ENCODE measurements at regions of chr11 and their contacts with region 1.

Region 1: GRCh38 chr11:123478352-123478987 is 48.4 kb downstream of the GRAMD1B start:
- DNase-seq: peak; percentile 39
- ATAC-seq: peak; percentile 47
- H3K4me3 Mint-ChIP-seq: peak overlapping the region; percentile 15
- H3K27ac Mint-ChIP-seq: peak overlapping the region; percentile 18
- H3K4me1 Mint-ChIP-seq: peaks cover 49% of the 10 kb centered on the region
- H3K27me3 Mint-ChIP-seq: no peaks in the 10 kb centered on the region

Region 2: GRCh38 chr11:123301696-123302400 is 176.6 kb before region 1 on chr11:
- CTCF ChIA-PET with region 1: interaction called, 47 read pairs
- POLR2A ChIA-PET with region 1: interaction called, 3 read pairs
- DNase-seq: peak; percentile 77
- ATAC-seq: peak; percentile 96
- H3K4me3 Mint-ChIP-seq: peak overlapping the region; percentile 44
- H3K27ac Mint-ChIP-seq: no peak overlapping the region
- H3K4me1 Mint-ChIP-seq: peaks cover 41% of the 10 kb centered on the region
- H3K27me3 Mint-ChIP-seq: peaks cover 3% of the 10 kb centered on the region

Region 3: GRCh38 chr11:123366924-123367323 is 111.5 kb before region 1 on chr11:
- CTCF ChIA-PET with region 1: no interaction called
- POLR2A ChIA-PET with region 1: no interaction called
- DNase-seq: no peak
- ATAC-seq: no peak
- H3K4me3 Mint-ChIP-seq: no peak overlapping the region
- H3K27ac Mint-ChIP-seq: no peak overlapping the region
- H3K4me1 Mint-ChIP-seq: peaks cover 25% of the 10 kb centered on the region
- H3K27me3 Mint-ChIP-seq: peaks cover 7% of the 10 kb centered on the region

Region 4: DNA sequence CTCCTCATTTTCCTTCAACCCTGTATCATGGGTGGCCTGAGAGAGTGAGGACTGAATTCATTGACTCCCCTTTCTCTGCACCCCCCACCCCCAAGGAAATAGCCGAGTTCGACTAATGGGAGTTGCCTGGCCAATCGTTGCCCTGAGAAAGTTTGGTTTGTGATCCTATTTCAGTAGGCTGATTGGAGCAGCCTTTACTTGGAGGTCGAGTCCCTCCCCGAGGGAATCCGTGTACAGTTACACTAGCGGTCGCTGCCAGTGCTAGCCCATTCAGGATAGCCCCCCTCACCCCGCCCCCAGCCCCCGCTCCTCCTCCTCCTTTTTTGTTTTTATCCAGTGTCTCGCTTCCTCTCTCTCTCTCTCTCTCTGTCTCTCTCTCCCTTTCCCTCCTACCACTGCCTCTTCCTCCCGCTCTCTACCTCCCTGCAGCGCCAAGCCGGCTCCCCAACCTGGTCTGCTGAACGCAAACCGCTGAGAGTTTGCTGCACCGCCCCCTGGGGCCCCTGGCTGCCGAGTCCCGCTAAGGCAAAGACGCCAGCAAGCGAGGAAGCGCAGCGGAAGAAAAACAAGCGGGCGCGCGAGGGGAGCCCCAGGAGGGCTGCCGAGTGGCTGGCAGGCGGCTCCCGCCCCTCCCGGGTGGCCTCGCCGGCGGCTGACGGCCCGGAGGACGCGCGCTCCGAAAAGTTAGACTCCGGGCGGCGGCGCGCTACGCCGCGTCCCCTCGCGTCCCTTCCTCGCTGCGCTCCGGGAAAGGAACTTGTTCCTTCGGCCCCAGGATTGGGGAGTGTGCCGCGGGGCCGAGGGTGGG is 48.4 kb before region 1 on chr11 and contains the start of gene GRAMD1B:
- CTCF ChIA-PET with region 1: interaction called, 18 read pairs
- POLR2A ChIA-PET with region 1: interaction called, 4 read pairs
- DNase-seq: peak; percentile 90
- ATAC-seq: peak; percentile 85
- H3K4me3 Mint-ChIP-seq: peak within 1 kb of the TSS; percentile 88
- H3K27ac Mint-ChIP-seq: peak within 1 kb of the TSS; percentile 96
- H3K4me1 Mint-ChIP-seq: peaks cover 47% of the 10 kb centered on the region
- H3K27me3 Mint-ChIP-seq: peaks cover 3% of the 10 kb centered on the region
- total RNA-seq, gene GRAMD1B: 22.8 to 26.0 TPM

Region 5: DNA sequence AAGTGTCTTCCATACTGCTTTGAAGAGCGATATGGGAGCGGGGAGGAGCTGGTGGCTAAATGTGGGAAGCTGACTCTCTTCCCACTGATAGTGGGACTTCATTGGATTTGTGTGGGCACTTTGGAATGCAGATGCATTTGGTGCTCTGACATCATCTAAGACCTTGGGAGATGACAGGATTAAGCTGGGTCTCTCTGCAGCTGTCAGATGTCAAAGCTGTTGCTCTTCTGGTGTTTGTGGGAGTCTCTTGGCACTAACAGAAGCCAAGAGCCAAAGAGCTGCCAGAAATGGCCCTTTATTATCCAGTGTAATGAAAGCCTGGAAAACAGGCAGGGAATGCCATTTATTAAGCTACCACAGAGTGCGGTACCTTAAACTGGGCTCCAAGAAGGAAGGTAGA is 27.8 kb before region 1 on chr11:
- CTCF ChIA-PET with region 1: interaction called, 21 read pairs
- POLR2A ChIA-PET with region 1: no interaction called
- DNase-seq: no peak
- ATAC-seq: no peak
- H3K4me3 Mint-ChIP-seq: no peak overlapping the region
- H3K27ac Mint-ChIP-seq: peak overlapping the region; percentile 82
- H3K4me1 Mint-ChIP-seq: peaks cover 68% of the 10 kb centered on the region
- H3K27me3 Mint-ChIP-seq: no peaks in the 10 kb centered on the region

Measured in activated CD8-positive, alpha-beta T cell treated with anti-CD3 and anti-CD28 coated beads, Interleukin-2, amount 10 ng/mL, durations not matched to agents 7 days and 5 days (primary cell).